AG04450 (cell line): ENCODE measurements at regions of chr1 and their contacts with region 1.

Region 1: GRCh38 chr1:91885716-91886506 is at the start of gene TGFBR3:
- DNase-seq: peak; percentile 87
- H3K4me3 ChIP-seq: peak within 1 kb of the TSS; percentile 80
- H3K27ac ChIP-seq: peak within 1 kb of the TSS; percentile 78
- H3K27me3 ChIP-seq: no peaks in the 10 kb centered on the region
- CTCF ChIP-seq: peak; percentile 59
- polyA plus RNA-seq, gene TGFBR3: 24.2 and 36.5 TPM in 2 replicates

Region 2: DNA sequence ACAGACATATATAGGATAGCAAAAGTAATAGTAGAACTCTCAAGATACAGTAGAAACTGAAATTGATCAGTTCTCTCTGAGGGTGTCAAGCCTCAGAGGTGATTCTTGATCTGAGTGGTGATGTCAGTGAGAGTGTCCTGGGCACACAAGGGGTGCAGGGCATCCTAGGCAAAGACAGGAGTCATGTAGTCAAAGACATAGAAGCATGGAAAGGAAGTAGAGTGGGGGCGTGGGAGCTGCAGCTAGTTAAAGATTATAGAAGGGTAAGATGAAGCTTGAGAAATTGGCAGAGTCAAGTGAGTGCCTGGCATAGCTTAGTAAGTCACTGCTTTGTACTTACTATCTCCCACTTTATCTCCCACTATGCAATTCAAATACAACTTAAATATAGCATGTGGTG is 362.4 kb before region 1 on chr1:
- CTCF ChIA-PET with region 1: interaction called, 13 read pairs
- POLR2A ChIA-PET with region 1: no interaction called
- DNase-seq: no peak
- H3K4me3 ChIP-seq: no peak overlapping the region
- H3K27ac ChIP-seq: no peak overlapping the region
- H3K27me3 ChIP-seq: no peaks in the 10 kb centered on the region
- CTCF ChIP-seq: no peak

Region 3: GRCh38 chr1:91846007-91846617 is 39.8 kb before region 1 on chr1:
- CTCF ChIA-PET with region 1: interaction called, 15 read pairs
- POLR2A ChIA-PET with region 1: interaction called, 5 read pairs
- DNase-seq: peak; percentile 29
- H3K4me3 ChIP-seq: no peak overlapping the region
- H3K27ac ChIP-seq: no peak overlapping the region
- H3K27me3 ChIP-seq: no peaks in the 10 kb centered on the region
- CTCF ChIP-seq: no peak

Region 4: GRCh38 chr1:91851130-91852010 is 34.5 kb before region 1 on chr1:
- CTCF ChIA-PET with region 1: interaction called, 15 read pairs
- POLR2A ChIA-PET with region 1: interaction called, 3 read pairs
- DNase-seq: peak; percentile 68
- H3K4me3 ChIP-seq: peak overlapping the region; percentile 38
- H3K27ac ChIP-seq: no peak overlapping the region
- H3K27me3 ChIP-seq: no peaks in the 10 kb centered on the region
- CTCF ChIP-seq: no peak

Region 5: GRCh38 chr1:91872560-91873081 is 13.3 kb before region 1 on chr1:
- CTCF ChIA-PET with region 1: interaction called, 10 read pairs
- POLR2A ChIA-PET with region 1: interaction called, 5 read pairs
- DNase-seq: no peak
- H3K4me3 ChIP-seq: no peak overlapping the region
- H3K27ac ChIP-seq: no peak overlapping the region
- H3K27me3 ChIP-seq: no peaks in the 10 kb centered on the region
- CTCF ChIP-seq: no peak

Region 6: DNA sequence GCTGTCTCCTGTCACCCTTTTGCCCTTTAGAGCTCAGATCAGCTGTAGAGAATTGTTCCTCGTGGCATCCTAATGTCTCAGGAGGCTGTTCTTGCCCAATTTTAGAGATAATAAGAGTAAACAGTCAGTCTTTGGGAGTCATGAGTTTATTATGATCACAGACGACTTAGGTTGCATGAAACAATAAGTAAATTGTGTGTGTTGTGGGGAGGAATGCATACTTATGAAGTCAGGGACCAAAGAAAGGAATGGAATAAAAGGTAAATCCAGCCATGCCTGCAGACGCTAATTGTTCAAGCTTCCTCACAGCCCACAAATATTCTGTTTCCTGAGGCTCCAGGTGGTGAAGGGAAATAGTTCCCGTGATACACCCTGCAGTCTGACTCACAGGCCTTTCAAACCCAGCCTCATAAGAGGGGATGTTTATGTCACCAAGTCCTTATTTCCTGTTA is 144.8 kb after region 1 on chr1:
- CTCF ChIA-PET with region 1: no interaction called
- POLR2A ChIA-PET with region 1: no interaction called
- DNase-seq: no peak
- H3K4me3 ChIP-seq: peak overlapping the region; percentile 65
- H3K27ac ChIP-seq: peak overlapping the region; percentile 39
- H3K27me3 ChIP-seq: no peaks in the 10 kb centered on the region
- CTCF ChIP-seq: no peak

Region 7: DNA sequence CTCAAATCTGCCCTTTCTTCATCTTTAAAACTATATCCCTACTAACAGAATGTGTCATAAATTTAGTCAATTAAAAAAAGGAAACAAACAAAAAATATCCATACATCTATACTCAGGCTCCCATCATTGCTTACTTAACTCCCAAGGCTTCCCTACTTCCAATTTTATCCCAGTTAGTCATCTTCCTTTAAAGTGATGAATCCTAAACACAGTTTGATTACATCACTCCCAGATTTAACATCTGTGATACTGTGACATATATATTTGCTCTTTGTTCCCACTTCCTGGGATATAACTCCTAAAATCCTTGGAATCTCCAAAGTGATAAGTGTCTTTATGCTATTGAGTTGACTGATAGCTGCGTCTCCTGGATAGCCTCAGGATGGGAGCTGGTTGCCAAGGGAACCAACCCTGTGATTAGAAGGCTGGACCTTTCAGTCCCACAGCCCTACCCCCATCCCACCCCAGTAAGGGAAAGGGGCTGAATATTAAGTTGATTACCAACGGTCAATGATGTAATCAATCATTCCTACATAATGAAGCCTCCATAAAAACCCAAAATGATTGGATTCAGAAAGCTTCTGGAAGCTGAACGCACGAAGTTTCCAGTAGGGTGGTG is 391.3 kb after region 1 on chr1:
- CTCF ChIA-PET with region 1: no interaction called
- POLR2A ChIA-PET with region 1: no interaction called
- DNase-seq: peak; percentile 45
- H3K4me3 ChIP-seq: no peak overlapping the region
- H3K27ac ChIP-seq: peak overlapping the region; percentile 80
- H3K27me3 ChIP-seq: no peaks in the 10 kb centered on the region
- CTCF ChIP-seq: no peak